ENCODE measurements at regions of chr6 and their contacts with region 1.

Region 1: GRCh38 chr6:56851541-56852259 is 103.2 kb upstream of the BEND6 start:
- DNase-seq: peak; percentile 66
- H3K4me3 ChIP-seq: peak overlapping the region; percentile 57 to 73
- H3K27ac ChIP-seq: peak overlapping the region; percentile 86 to 92
- H3K4me1 ChIP-seq: peaks cover 9 to 22% of the 10 kb centered on the region in 2 experiments; a peak in 3 of 4 replicates
- H3K27me3 ChIP-seq: no peaks in the 10 kb centered on the region
- CTCF ChIP-seq: peak; percentile 77
- EP300 ChIP-seq: peak in 1 of 2 experiments; percentile 29; a peak in 1 of 4 replicates
- RAD21 ChIP-seq: peak; percentile 87

Region 2: GRCh38 chr6:56624046-56624727 is 227.5 kb before region 1 on chr6:
- CTCF ChIA-PET with region 1: interaction called, 14 read pairs
- POLR2A ChIA-PET with region 1: no interaction called
- DNase-seq: no peak
- H3K4me3 ChIP-seq: no peak overlapping the region
- H3K27ac ChIP-seq: no peak overlapping the region
- H3K4me1 ChIP-seq: no peaks in the 10 kb centered on the region
- H3K27me3 ChIP-seq: no peaks in the 10 kb centered on the region
- CTCF ChIP-seq: no peak
- EP300 ChIP-seq: no peak
- RAD21 ChIP-seq: no peak

Region 3: DNA sequence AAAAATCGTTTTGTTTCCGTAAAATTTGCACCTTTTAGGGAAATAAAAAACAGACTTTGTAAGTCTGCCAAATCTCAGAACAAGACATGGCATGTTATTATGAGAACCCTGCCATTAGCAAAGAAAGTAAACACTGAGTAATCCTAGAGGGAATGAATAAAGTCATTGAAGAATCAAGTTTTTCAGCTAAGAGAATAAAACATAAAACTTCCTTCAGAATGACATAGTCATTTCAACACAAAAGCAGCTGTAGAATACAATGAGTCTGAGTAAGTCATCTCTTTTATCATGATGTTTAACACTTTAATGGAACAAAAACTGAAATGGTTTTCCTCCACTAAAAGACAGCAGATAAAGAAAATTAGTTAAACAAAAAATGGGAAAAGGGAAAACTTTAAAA is 198.7 kb before region 1 on chr6:
- CTCF ChIA-PET with region 1: interaction called, 19 read pairs
- POLR2A ChIA-PET with region 1: no interaction called
- DNase-seq: no peak
- H3K4me3 ChIP-seq: no peak overlapping the region; a peak in 1 of 4 replicates
- H3K27ac ChIP-seq: peak overlapping the region; percentile 76 to 87; a peak in 3 of 4 replicates
- H3K4me1 ChIP-seq: peaks cover 2 to 43% of the 10 kb centered on the region in 2 experiments; a peak in 3 of 4 replicates
- H3K27me3 ChIP-seq: no peaks in the 10 kb centered on the region
- CTCF ChIP-seq: no peak
- EP300 ChIP-seq: peak in 1 of 2 experiments; percentile 73; a peak in 2 of 4 replicates
- RAD21 ChIP-seq: no peak

Region 4: DNA sequence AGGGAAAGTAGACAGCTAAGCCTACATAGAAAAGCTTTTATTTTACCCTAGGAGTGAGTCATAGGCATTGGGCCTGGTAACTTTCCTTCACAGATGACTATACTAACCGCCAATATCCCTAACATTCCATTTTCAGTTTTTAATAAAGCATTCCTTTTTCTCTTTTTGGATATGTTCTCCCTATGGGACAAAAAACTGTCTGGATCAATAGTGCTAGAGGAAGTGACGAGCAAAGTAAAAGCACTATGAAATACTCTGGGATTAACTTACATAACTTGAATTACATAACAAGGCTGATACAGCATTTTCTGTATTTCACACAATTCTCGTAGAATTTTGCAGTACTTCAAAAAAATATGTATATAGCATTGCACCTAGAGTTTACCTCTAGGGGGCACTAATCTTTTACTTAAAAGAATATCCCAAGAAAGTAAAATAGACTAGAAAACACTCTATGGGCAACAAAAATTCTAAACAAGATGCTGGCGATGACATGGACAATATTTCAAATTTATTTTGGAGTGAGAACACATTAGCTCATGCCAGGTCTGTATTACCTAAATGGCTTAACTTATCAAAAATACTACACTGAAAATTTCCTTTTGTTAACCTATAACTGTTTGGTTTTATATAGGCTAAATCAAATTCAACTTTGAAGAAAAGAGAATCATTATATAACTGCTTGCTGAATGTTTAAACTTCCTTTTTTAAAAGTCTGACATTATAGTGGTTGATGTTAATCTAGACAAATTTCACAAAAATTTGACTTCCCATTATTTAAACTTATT is 142.7 kb before region 1 on chr6:
- CTCF ChIA-PET with region 1: interaction called, 120 read pairs
- POLR2A ChIA-PET with region 1: interaction called, 5 read pairs
- DNase-seq: peak; percentile 39
- H3K4me3 ChIP-seq: peak overlapping the region; percentile 12 to 50; a peak in 3 of 4 replicates
- H3K27ac ChIP-seq: peak overlapping the region; percentile 64 to 93
- H3K4me1 ChIP-seq: peaks cover 2 to 33% of the 10 kb centered on the region in 2 experiments
- H3K27me3 ChIP-seq: no peaks in the 10 kb centered on the region
- CTCF ChIP-seq: peak; percentile 80
- EP300 ChIP-seq: peak in 1 of 2 experiments; percentile 76; a peak in 2 of 4 replicates
- RAD21 ChIP-seq: peak; percentile 71

Region 5: DNA sequence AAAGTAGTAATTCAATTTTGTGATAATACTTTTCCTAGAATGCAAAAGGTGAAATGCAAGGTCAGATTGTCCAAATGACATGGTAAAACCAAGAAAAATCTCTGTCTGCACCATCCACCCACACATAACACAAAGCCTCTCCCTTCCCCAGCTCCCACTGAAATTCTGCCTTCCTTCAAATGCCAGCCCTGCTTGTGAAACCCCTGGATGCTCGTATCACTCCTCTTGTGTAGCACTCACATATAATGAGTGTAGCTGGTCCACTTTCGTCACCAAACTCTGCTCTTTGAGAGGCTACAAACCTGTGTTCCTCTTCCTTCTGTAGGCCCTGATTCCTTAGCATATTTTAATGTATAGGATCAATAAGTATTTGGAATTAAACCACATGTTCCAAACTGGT is 20.4 kb before region 1 on chr6:
- CTCF ChIA-PET with region 1: no interaction called
- POLR2A ChIA-PET with region 1: no interaction called
- DNase-seq: no peak
- H3K4me3 ChIP-seq: no peak overlapping the region
- H3K27ac ChIP-seq: no peak overlapping the region
- H3K4me1 ChIP-seq: peaks cover 2 to 12% of the 10 kb centered on the region in 2 experiments; a peak in 3 of 4 replicates
- H3K27me3 ChIP-seq: no peaks in the 10 kb centered on the region
- CTCF ChIP-seq: no peak
- EP300 ChIP-seq: no peak
- RAD21 ChIP-seq: no peak

Region 6: GRCh38 chr6:56868687-56869086 is 17.0 kb after region 1 on chr6:
- CTCF ChIA-PET with region 1: interaction called, 42 read pairs
- POLR2A ChIA-PET with region 1: no interaction called
- DNase-seq: peak; percentile 39
- H3K4me3 ChIP-seq: no peak overlapping the region; a peak in 1 of 4 replicates
- H3K27ac ChIP-seq: peak overlapping the region; percentile 45 to 90; a peak in 3 of 4 replicates
- H3K4me1 ChIP-seq: peaks cover 11 to 42% of the 10 kb centered on the region in 2 experiments; a peak in 3 of 4 replicates
- H3K27me3 ChIP-seq: no peaks in the 10 kb centered on the region
- CTCF ChIP-seq: no peak
- EP300 ChIP-seq: peak; percentile 22 to 64; a peak in 3 of 4 replicates
- RAD21 ChIP-seq: no peak